ENCODE measurements at regions of chr18 and their contacts with region 1.

Region 1: GRCh38 chr18:35972197-35973052 is at the start of gene RMP24:
- DNase-seq: peak; percentile 97
- ATAC-seq: peak; percentile 87
- H3K4me3 Mint-ChIP-seq: peak within 1 kb of the TSS; percentile 99
- H3K27ac Mint-ChIP-seq: peak within 1 kb of the TSS; percentile 96
- H3K4me1 Mint-ChIP-seq: peaks cover 49% of the 10 kb centered on the region
- H3K27me3 Mint-ChIP-seq: no peaks in the 10 kb centered on the region

Region 2: GRCh38 chr18:34867520-34867919 is 1104.9 kb before region 1 on chr18:
- CTCF ChIA-PET with region 1: no interaction called
- POLR2A ChIA-PET with region 1: no interaction called
- intact Hi-C with region 1: loop called in 1 of 2 experiments (anchors 1 kb)
- DNase-seq: peak; percentile 34
- ATAC-seq: no peak
- H3K4me3 Mint-ChIP-seq: no peak overlapping the region
- H3K27ac Mint-ChIP-seq: peak overlapping the region; percentile 67
- H3K4me1 Mint-ChIP-seq: peaks cover 47% of the 10 kb centered on the region
- H3K27me3 Mint-ChIP-seq: peaks cover 3% of the 10 kb centered on the region

Region 3: DNA sequence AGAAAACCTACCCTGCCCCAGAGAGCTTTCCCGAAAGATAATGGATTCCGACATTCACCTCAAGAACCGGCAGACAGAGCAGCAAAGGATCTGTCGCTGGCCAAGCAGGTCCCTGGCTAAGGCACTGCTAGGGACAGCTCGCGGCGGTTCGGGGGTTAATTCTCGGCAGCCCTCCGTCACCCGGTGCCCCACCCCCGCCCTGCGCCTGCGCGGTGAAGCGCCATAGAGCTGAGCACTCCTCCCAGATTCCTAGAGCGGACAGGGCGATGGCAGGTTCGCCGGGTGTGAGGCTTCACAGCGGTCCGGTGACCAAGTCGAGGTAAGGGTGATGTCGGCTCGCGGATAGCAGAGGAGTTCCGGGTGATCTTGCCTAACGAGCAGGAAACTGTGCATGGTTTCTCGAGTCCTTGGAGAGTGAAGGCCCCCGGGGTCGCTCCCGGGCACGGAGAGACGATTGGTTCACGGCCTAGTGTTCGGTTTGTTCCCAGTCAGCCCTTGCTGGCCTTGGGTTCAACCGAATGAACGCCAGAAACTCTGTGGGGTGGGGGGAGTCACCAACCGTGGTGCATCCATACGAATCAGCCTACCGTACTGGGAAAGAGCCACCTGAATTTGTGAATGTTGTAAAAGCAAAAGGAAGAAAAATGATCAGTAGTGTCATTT is 682.2 kb before region 1 on chr18 and contains the start of gene ZSCAN30:
- CTCF ChIA-PET with region 1: no interaction called
- POLR2A ChIA-PET with region 1: no interaction called
- intact Hi-C with region 1: loop called in 1 of 2 experiments (anchors 1 kb)
- DNase-seq: peak; percentile 97
- ATAC-seq: peak; percentile 97
- H3K4me3 Mint-ChIP-seq: peak within 1 kb of the TSS; percentile 96
- H3K27ac Mint-ChIP-seq: peak within 1 kb of the TSS; percentile 96
- H3K4me1 Mint-ChIP-seq: peaks cover 45% of the 10 kb centered on the region
- H3K27me3 Mint-ChIP-seq: no peaks in the 10 kb centered on the region
- total RNA-seq, gene ZSCAN30: 24.2 to 25.4 TPM

Region 4: DNA sequence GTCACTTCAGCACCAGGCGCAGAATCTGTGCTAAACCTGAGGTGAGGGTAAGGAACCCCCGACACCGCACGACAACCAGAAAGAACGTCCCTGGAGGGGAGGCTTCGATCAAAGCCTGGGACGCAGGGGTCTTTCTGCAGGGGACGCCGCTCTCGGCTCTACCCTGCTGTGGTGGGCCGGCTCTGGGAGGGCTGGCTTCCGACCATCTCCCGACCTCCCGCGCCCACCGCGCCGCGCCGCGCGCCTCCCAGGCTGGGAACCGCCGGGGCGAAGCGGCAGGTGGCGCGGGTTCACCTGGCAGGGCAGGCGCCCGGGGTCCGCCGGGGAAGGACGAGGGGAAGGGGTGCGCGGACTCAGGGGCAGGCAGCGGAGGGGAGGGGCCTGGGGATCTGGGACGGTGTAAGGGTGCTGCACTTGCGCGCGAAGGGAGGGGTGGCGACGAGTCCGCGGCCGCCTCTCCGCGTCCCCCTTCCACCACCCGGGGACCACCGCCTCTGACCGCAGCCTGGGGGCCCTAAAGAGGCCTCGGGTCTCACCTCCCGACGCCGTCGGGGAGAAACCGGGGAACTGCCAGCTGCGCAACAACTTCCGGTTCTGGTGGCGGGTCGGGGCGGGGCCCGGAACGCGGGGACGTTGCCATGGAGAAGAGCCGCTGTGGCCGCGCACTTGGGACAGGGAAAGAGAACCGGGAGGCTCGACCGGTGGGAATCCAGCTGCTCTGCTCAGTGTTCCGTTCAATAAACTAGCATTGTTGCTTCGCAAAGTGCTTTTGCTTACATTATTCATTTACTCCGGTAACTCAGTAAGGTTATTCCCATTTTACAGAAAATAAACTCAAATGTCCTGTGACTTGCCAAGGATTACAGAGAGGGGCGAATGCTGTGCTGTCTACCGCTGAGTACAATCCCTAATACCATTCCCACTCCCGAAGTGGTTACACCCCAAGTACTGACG is 595.4 kb before region 1 on chr18 and contains the start of gene ZNF396:
- CTCF ChIA-PET with region 1: no interaction called
- POLR2A ChIA-PET with region 1: no interaction called
- intact Hi-C with region 1: loop called in 1 of 2 experiments (anchors 2 kb)
- DNase-seq: peak; percentile 81
- ATAC-seq: peak; percentile 79
- H3K4me3 Mint-ChIP-seq: peak within 1 kb of the TSS; percentile 71
- H3K27ac Mint-ChIP-seq: peak within 1 kb of the TSS; percentile 19
- H3K4me1 Mint-ChIP-seq: peaks cover 10% of the 10 kb centered on the region
- H3K27me3 Mint-ChIP-seq: no peaks in the 10 kb centered on the region
- total RNA-seq, gene ZNF396: 0.47 to 1.1 TPM

Region 5: DNA sequence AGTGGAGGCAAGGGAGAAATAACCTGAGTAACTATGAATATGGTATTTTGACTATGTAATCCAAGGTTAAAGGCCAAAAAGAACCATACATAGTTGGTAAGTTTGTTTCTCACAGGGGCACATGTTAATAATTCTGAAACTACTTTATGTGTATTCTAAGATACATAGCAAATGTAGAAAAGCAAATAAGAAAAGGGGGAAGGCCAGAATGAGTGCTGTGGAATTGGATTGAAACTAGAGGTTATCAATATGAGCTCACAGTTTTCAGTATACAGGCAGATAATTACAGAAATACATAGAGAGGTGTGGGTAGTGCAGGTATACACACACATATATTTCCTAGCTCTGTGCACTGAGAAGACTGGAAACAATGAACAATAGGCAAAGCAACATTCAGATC is 488.4 kb before region 1 on chr18:
- CTCF ChIA-PET with region 1: no interaction called
- POLR2A ChIA-PET with region 1: no interaction called
- intact Hi-C with region 1: loop called in 1 of 2 experiments (anchors 5 kb)
- DNase-seq: no peak
- ATAC-seq: peak; percentile 95
- H3K4me3 Mint-ChIP-seq: no peak overlapping the region
- H3K27ac Mint-ChIP-seq: no peak overlapping the region
- H3K4me1 Mint-ChIP-seq: peaks cover 47% of the 10 kb centered on the region
- H3K27me3 Mint-ChIP-seq: no peaks in the 10 kb centered on the region

Region 6: GRCh38 chr18:35616664-35617423 is 355.6 kb before region 1 on chr18:
- CTCF ChIA-PET with region 1: no interaction called
- POLR2A ChIA-PET with region 1: no interaction called
- intact Hi-C with region 1: loop called (anchors 2 kb)
- DNase-seq: peak; percentile 81
- ATAC-seq: peak; percentile 94
- H3K4me3 Mint-ChIP-seq: no peak overlapping the region
- H3K27ac Mint-ChIP-seq: no peak overlapping the region
- H3K4me1 Mint-ChIP-seq: peaks cover 16% of the 10 kb centered on the region
- H3K27me3 Mint-ChIP-seq: no peaks in the 10 kb centered on the region

Region 7: DNA sequence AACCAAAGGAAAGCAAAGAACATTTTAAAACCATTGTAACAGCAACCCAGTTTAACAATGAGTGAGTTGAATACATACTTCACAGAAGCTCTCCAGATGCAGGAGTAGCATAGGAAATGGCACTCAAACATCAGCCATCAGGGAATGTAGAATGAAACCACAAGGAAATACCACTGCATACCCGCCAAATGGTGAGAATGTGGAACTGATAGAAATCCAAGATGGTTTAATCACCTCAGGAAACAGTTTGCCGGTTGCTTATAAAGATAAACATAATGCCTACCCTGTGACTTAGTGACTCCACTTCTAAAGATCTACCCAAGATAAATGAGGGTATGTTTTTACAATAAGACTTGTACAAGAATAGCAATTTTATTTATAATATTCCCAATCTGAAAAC is 258.9 kb before region 1 on chr18:
- CTCF ChIA-PET with region 1: no interaction called
- POLR2A ChIA-PET with region 1: no interaction called
- intact Hi-C with region 1: no loop called
- DNase-seq: no peak
- ATAC-seq: no peak
- H3K4me3 Mint-ChIP-seq: no peak overlapping the region
- H3K27ac Mint-ChIP-seq: no peak overlapping the region
- H3K4me1 Mint-ChIP-seq: no peaks in the 10 kb centered on the region
- H3K27me3 Mint-ChIP-seq: no peaks in the 10 kb centered on the region

Region 8: DNA sequence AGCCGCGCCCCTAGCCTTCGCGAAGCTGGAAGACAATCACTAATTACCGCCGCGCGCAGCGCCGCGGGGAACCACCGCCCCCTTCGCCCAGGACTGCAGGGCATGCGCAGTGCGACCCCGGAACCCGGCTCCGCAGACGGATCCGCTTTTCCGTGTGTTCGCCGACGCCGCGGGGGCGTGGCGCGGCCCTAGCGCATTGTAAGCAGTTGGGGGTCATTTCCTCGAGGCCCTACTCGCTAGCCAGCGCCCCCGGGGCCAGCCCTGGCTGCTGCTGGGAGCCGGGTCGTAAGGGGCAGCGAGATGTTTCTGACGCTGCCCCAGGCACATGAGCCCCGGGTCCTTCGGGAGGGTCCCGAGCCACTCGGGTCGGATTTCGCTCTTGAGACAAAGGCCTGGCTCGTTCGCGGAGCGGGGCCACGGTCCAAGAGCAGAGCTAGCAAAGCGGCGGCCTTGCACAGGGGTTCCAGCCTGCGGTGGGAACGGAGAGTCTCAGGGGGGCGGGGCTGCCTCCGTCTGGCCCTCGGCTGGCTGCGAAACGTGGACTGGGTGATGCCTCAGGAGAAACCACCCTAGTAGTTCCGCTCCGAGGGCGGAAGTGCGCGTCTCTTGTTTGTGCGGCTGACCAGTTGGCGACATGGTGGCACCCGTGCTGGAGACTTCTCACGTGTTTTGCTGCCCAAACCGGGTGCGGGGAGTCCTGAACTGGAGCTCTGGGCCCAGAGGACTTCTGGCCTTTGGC is 157.0 kb after region 1 on chr18 and contains the starts of genes ELP2 and SLC39A6:
- CTCF ChIA-PET with region 1: no interaction called
- POLR2A ChIA-PET with region 1: interaction called, 4 read pairs
- intact Hi-C with region 1: loop called (anchors 1 kb)
- DNase-seq: peak; percentile 97
- ATAC-seq: peak; percentile 94
- H3K4me3 Mint-ChIP-seq: peak within 1 kb of the TSS; percentile 92
- H3K27ac Mint-ChIP-seq: peak within 1 kb of the TSS; percentile 95
- H3K4me1 Mint-ChIP-seq: peaks cover 57% of the 10 kb centered on the region
- H3K27me3 Mint-ChIP-seq: no peaks in the 10 kb centered on the region
- total RNA-seq, gene ELP2: 76.5 to 114 TPM
- total RNA-seq, gene SLC39A6: 23.9 to 28.6 TPM

Measured in activated CD4-positive, alpha-beta T cell treated with anti-CD3 and anti-CD28 coated beads for 36 hours (primary cell).